ENCODE measurements at regions of chr14 and their contacts with region 1.

Region 1: GRCh38 chr14:75176142-75176820 is at the start of gene TMED10:
- DNase-seq: peak in 1 of 2 donors; percentile 93
- H3K4me3 ChIP-seq: peak within 1 kb of the TSS; percentile 84 to 100
- H3K27ac ChIP-seq: peak within 1 kb of the TSS; percentile 95
- H3K4me1 ChIP-seq: peaks cover 45% of the 10 kb centered on the region
- H3K27me3 ChIP-seq: no peaks in the 10 kb centered on the region
- CTCF ChIP-seq: no peak
- POLR2A ChIP-seq: peak in 1 of 2 donors; percentile 66
- total RNA-seq, gene TMED10: 249 TPM

Region 2: GRCh38 chr14:75258615-75259466 is 82.6 kb after region 1 on chr14:
- intact Hi-C with region 1: loop called (anchors 5 kb)
- DNase-seq: peak; percentile 99 to 100
- H3K4me3 ChIP-seq: peak overlapping the region; percentile 52
- H3K27ac ChIP-seq: peak overlapping the region; percentile 94
- H3K4me1 ChIP-seq: peaks cover 45% of the 10 kb centered on the region
- H3K27me3 ChIP-seq: no peaks in the 10 kb centered on the region
- CTCF ChIP-seq: no peak
- POLR2A ChIP-seq: peak in 1 of 2 donors; percentile 51

Measured in vagina (tissue), 2 donors.